ENCODE measurements at regions of chr10 and their contacts with region 1.

Region 1: GRCh38 chr10:130110246-130111112 is at the start of gene C10orf143:
- DNase-seq: peak; percentile 98
- H3K4me3 ChIP-seq: peak within 1 kb of the TSS; percentile 17 to 86 (median 73)
- H3K27ac ChIP-seq: peak within 1 kb of the TSS; percentile 65
- H3K4me1 ChIP-seq: peaks cover 13% of the 10 kb centered on the region
- H3K27me3 ChIP-seq: no peaks in the 10 kb centered on the region
- CTCF ChIP-seq: no peak
- POLR2A ChIP-seq: peak; percentile 89
- total RNA-seq, gene C10orf143: 0.44 and 0.92 TPM in 2 replicates

Region 2: DNA sequence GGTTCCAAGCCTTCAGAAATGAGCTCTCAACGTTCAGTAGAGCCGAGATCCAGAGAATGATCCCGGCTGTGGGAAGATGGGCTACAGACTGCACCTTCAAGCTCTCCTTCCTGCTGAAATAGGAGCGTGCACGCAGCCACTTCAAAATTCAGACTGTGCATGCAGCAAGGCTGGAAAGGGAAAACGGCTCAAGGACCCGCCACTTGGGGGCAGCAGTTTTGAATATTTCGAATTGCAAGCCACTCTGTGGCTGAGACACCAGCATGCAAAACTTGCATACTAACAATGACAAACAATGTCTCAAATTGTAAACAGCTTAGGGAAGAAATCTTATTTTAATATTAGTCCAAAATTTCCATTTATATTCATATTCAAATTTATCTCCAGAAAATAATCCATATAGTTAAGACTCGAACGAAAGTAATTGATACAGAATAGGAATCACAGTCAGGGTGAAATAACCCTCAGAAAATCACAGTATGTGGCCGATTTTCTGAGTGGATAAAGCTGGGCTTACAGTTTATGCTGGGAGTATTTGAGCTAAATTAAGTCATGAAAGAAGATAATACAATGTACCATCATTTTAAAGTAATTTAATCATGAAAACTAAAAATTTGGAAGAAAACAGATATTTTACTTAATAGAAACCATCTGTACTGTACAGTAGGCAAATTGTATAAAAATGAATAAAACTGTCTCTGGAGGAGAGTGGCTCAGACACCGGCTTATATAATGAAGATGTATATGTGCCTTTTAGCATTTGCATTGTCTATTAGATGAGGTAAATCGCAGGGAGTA is 1846.4 kb before region 1 on chr10:
- CTCF ChIA-PET with region 1: interaction called, 16 read pairs
- POLR2A ChIA-PET with region 1: no interaction called
- dilution Hi-C with region 1: no loop called
- intact Hi-C with region 1: no loop called
- DNase-seq: peak; percentile 52
- H3K4me3 ChIP-seq: no peak overlapping the region
- H3K27ac ChIP-seq: no peak overlapping the region
- H3K4me1 ChIP-seq: no peaks in the 10 kb centered on the region
- H3K27me3 ChIP-seq: peaks cover 2 to 12% of the 10 kb centered on the region in 2 experiments
- CTCF ChIP-seq: peak; percentile 60 to 73
- POLR2A ChIP-seq: no peak

Region 3: GRCh38 chr10:129416956-129417765 is 693.3 kb before region 1 on chr10:
- CTCF ChIA-PET with region 1: no interaction called
- POLR2A ChIA-PET with region 1: no interaction called
- dilution Hi-C with region 1: no loop called
- intact Hi-C with region 1: loop called (anchors 1 kb)
- DNase-seq: peak; percentile 59
- H3K4me3 ChIP-seq: no peak overlapping the region
- H3K27ac ChIP-seq: peak overlapping the region; percentile 62
- H3K4me1 ChIP-seq: peaks cover 17% of the 10 kb centered on the region
- H3K27me3 ChIP-seq: no peaks in the 10 kb centered on the region
- CTCF ChIP-seq: no peak
- POLR2A ChIP-seq: no peak

Region 4: DNA sequence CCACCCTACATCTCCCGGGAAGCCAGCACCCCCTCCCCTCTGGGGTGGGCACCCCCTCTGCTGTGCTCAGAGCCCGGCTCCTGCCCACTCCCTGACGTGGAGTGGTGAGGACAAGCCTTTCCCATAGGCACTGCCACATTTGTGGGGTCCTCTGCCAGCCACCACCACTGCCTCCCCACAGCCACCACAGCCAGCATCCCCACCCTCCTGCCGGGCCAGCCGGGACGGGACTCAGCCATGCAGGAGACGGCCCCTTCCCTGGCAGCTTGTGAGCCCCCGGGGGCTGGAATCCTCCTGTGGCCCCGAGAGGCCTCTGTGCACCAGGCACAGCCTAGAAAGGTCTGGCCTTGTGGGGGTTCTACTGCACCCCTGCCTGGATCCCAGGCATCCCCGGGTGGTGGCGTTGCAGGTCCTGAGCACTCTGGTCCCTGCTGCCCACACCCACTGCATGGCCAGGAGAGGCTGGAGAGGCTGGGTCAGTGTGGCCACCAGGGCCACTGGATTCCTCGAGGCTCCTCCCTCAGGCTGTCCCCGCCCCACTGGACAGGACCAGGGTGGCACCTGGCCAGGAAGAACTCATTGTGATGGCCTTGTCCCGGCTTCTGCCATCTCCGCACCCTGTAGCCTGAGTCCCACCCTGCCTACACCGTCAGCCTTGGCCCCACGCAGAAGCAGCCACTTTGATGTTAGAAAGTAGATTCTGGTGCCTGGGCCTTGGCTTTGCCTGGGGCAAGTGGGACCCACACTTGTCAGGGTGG is 294.4 kb before region 1 on chr10:
- CTCF ChIA-PET with region 1: no interaction called
- POLR2A ChIA-PET with region 1: no interaction called
- dilution Hi-C with region 1: no loop called
- intact Hi-C with region 1: no loop called
- DNase-seq: no peak
- H3K4me3 ChIP-seq: no peak overlapping the region
- H3K27ac ChIP-seq: no peak overlapping the region
- H3K4me1 ChIP-seq: no peaks in the 10 kb centered on the region
- H3K27me3 ChIP-seq: no peaks in the 10 kb centered on the region
- CTCF ChIP-seq: no peak
- POLR2A ChIP-seq: no peak

Region 5: DNA sequence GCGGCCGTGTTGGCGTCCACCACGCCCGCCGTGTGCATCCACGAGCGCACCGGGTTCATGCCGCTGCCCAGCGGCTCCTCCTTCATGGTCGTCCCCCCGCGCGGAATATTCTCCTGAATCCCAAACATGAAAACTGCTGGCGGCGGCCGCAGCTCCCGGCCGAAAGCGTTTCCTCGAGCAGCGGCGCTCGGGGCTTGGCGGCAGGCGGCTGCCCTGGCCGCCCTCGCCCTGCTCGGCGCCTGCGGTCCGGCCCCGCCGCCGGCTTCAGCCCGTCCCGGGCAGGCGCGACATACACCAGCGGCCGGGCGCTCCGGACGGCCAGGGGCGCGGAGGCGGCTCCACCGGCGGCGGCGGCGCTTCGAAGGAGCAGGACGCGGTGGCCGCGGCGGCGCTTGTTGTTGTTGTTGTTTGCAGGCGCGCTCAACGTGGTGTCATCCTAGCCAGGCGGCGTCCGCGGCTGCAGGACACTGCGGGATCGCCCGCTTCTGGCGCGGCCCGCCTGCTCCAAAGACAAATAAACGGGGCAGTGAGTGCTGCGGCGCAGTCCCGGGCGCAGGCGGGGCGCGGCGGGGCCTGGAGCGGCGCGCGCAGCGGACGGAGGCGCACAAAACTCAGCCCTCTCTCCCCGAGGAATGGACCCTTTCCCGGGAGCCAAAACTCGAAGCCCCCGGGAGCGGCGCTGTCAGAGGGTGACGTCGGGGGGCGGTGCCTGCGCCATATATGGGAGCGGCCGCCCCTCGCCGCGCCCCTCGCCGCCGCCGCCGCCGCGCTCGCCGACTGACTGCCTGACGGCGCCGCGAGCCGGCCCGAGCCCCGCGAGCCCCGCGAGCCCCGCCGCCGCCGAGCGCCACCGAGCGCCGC is 146.6 kb before region 1 on chr10 and contains the start of gene EBF3:
- CTCF ChIA-PET with region 1: no interaction called
- POLR2A ChIA-PET with region 1: no interaction called
- dilution Hi-C with region 1: no loop called
- intact Hi-C with region 1: loop called (anchors 2 kb)
- DNase-seq: peak; percentile 48
- H3K4me3 ChIP-seq: peak within 1 kb of the TSS; percentile 35 to 59 (median 38)
- H3K27ac ChIP-seq: peak within 1 kb of the TSS; percentile 21
- H3K4me1 ChIP-seq: peaks cover 9% of the 10 kb centered on the region
- H3K27me3 ChIP-seq: peaks cover 67 to 89% of the 10 kb centered on the region in 2 experiments
- CTCF ChIP-seq: no peak
- POLR2A ChIP-seq: no peak
- total RNA-seq, gene EBF3: 2.0 and 2.7 TPM in 2 replicates

Region 6: GRCh38 chr10:130127364-130128061 is 17.0 kb after region 1 on chr10:
- CTCF ChIA-PET with region 1: interaction called, 26 read pairs
- POLR2A ChIA-PET with region 1: no interaction called
- dilution Hi-C with region 1: no loop called
- intact Hi-C with region 1: loop called (anchors 1 kb)
- DNase-seq: peak; percentile 76
- H3K4me3 ChIP-seq: no peak overlapping the region
- H3K27ac ChIP-seq: no peak overlapping the region
- H3K4me1 ChIP-seq: no peaks in the 10 kb centered on the region
- H3K27me3 ChIP-seq: peaks cover 5 to 8% of the 10 kb centered on the region in 2 experiments
- CTCF ChIP-seq: peak; percentile 73
- POLR2A ChIP-seq: no peak

Region 7: DNA sequence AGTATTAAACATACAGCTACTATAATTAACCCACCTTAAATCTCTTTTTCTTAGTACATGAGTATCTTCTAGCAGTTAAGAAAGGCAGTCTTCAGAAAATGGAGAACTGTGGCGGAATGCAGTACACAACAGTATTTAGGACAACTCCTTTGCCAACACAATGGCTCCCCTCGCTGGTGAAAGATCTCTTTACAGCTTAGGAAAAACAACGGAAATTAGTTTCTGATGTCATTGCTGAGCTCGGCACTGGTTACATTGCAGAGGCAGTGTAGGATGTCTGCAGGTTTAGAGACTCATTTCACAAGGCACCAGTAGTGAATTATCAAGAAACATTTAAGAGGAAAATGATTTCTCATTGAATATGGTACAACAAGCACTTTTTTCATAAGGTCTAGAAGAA is 69.2 kb after region 1 on chr10:
- CTCF ChIA-PET with region 1: interaction called, 14 read pairs
- POLR2A ChIA-PET with region 1: no interaction called
- dilution Hi-C with region 1: no loop called
- intact Hi-C with region 1: loop called (anchors 1 kb)
- DNase-seq: peak; percentile 82
- H3K4me3 ChIP-seq: no peak overlapping the region
- H3K27ac ChIP-seq: no peak overlapping the region
- H3K4me1 ChIP-seq: no peaks in the 10 kb centered on the region
- H3K27me3 ChIP-seq: no peaks in the 10 kb centered on the region
- CTCF ChIP-seq: peak; percentile 38 to 46
- POLR2A ChIP-seq: no peak